HCT116 (cell line): ENCODE measurements at regions of chr16 and their contacts with region 1.

Region 1: GRCh38 chr16:68590201-68590994 is 51.3 kb downstream of the ZFP90 start:
- DNase-seq: peak; percentile 54
- ATAC-seq: peak; percentile 100
- H3K4me3 ChIP-seq: peak overlapping the region; percentile 13 to 27; a peak in 2 of 4 replicates
- H3K27ac ChIP-seq: no peak overlapping the region
- H3K4me1 ChIP-seq: peaks cover 0 to 9% of the 10 kb centered on the region in 2 experiments; a peak in 3 of 4 replicates
- H3K27me3 ChIP-seq: no peaks in the 10 kb centered on the region
- CTCF ChIP-seq: peak; percentile 85 to 90 (median 85)
- POLR2A ChIP-seq: no peak
- RAD21 ChIP-seq: peak; percentile 99

Region 2: DNA sequence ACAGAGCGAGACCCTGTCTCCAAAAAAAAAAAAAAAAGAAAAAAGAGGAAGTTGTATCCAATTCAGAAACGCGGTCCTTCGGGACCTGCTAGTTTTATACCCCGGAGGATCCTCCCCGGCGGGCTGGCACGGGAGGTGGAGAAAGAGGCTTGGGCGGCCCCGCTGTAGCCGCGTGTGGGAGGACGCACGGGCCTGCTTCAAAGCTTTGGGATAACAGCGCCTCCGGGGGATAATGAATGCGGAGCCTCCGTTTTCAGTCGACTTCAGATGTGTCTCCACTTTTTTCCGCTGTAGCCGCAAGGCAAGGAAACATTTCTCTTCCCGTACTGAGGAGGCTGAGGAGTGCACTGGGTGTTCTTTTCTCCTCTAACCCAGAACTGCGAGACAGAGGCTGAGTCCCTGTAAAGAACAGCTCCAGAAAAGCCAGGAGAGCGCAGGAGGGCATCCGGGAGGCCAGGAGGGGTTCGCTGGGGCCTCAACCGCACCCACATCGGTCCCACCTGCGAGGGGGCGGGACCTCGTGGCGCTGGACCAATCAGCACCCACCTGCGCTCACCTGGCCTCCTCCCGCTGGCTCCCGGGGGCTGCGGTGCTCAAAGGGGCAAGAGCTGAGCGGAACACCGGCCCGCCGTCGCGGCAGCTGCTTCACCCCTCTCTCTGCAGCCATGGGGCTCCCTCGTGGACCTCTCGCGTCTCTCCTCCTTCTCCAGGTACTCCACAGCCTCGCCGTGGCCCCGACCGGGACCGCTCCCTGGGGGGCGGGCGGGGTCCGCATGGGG is 54.5 kb after region 1 on chr16 and contains the start of gene CDH3:
- CTCF ChIA-PET with region 1: interaction called, 10 read pairs
- POLR2A ChIA-PET with region 1: interaction called, 7 read pairs
- RAD21 ChIA-PET with region 1: interaction called in 1 of 2 experiments, 7 read pairs
- intact Hi-C with region 1: no loop called
- DNase-seq: peak; percentile 67
- ATAC-seq: peak; percentile 88
- H3K4me3 ChIP-seq: peak within 1 kb of the TSS; percentile 85 to 95
- H3K27ac ChIP-seq: peak within 1 kb of the TSS; percentile 82
- H3K4me1 ChIP-seq: peaks cover 21 to 38% of the 10 kb centered on the region in 2 experiments
- H3K27me3 ChIP-seq: no peaks in the 10 kb centered on the region
- CTCF ChIP-seq: no peak; a peak in 1 of 6 replicates
- POLR2A ChIP-seq: peak; percentile 25
- RAD21 ChIP-seq: 0 out of 2 replicates have a peak, but pooled peaks have one; percentile 21
- total RNA-seq, gene CDH3: 94.7 TPM

Region 3: GRCh38 chr16:68800257-68800875 is 210.0 kb after region 1 on chr16:
- CTCF ChIA-PET with region 1: interaction called, 9 read pairs
- POLR2A ChIA-PET with region 1: no interaction called
- RAD21 ChIA-PET with region 1: interaction called, 3 to 4 read pairs
- intact Hi-C with region 1: loop called (anchors 2 kb)
- DNase-seq: peak; percentile 62
- ATAC-seq: peak; percentile 95
- H3K4me3 ChIP-seq: no peak overlapping the region
- H3K27ac ChIP-seq: no peak overlapping the region
- H3K4me1 ChIP-seq: peaks cover 17 to 24% of the 10 kb centered on the region in 2 experiments
- H3K27me3 ChIP-seq: no peaks in the 10 kb centered on the region
- CTCF ChIP-seq: peak; percentile 87 to 90 (median 88)
- POLR2A ChIP-seq: no peak
- RAD21 ChIP-seq: peak; percentile 91

Region 4: GRCh38 chr16:68902008-68902968 is 311.9 kb after region 1 on chr16:
- CTCF ChIA-PET with region 1: interaction called, 11 read pairs
- POLR2A ChIA-PET with region 1: no interaction called
- RAD21 ChIA-PET with region 1: no interaction called
- intact Hi-C with region 1: loop called (anchors 10 kb)
- DNase-seq: peak; percentile 72
- ATAC-seq: peak; percentile 90
- H3K4me3 ChIP-seq: no peak overlapping the region
- H3K27ac ChIP-seq: no peak overlapping the region
- H3K4me1 ChIP-seq: peaks cover 0 to 13% of the 10 kb centered on the region in 2 experiments; a peak in 2 of 4 replicates
- H3K27me3 ChIP-seq: no peaks in the 10 kb centered on the region
- CTCF ChIP-seq: peak; percentile 85 to 92 (median 90)
- POLR2A ChIP-seq: no peak
- RAD21 ChIP-seq: peak; percentile 98